ENCODE measurements at regions of chr2 and their contacts with region 1.

Region 1: GRCh38 chr2:64831134-64831976 is 157.8 kb upstream of the SLC1A4 start:
- H3K4me3 Mint-ChIP-seq: peak overlapping the region; percentile 35
- H3K27ac Mint-ChIP-seq: peak overlapping the region; percentile 86
- H3K4me1 Mint-ChIP-seq: peaks cover 47% of the 10 kb centered on the region
- H3K27me3 Mint-ChIP-seq: no peaks in the 10 kb centered on the region

Region 2: GRCh38 chr2:64644177-64645004 is 187.0 kb before region 1 on chr2:
- intact Hi-C with region 1: loop called (anchors 1 kb)
- H3K4me3 Mint-ChIP-seq: peak overlapping the region; percentile 91
- H3K27ac Mint-ChIP-seq: peak overlapping the region; percentile 98
- H3K4me1 Mint-ChIP-seq: peaks cover 64% of the 10 kb centered on the region
- H3K27me3 Mint-ChIP-seq: no peaks in the 10 kb centered on the region

Region 3: GRCh38 chr2:64767670-64768468 is 63.5 kb before region 1 on chr2:
- intact Hi-C with region 1: loop called (anchors 5 kb)
- H3K4me3 Mint-ChIP-seq: peak overlapping the region; percentile 88
- H3K27ac Mint-ChIP-seq: peak overlapping the region; percentile 80
- H3K4me1 Mint-ChIP-seq: peaks cover 42% of the 10 kb centered on the region
- H3K27me3 Mint-ChIP-seq: peaks cover 2% of the 10 kb centered on the region

Region 4: GRCh38 chr2:64865073-64865830 is 33.9 kb after region 1 on chr2:
- intact Hi-C with region 1: loop called (anchors 2 kb)
- H3K4me3 Mint-ChIP-seq: peak overlapping the region; percentile 68
- H3K27ac Mint-ChIP-seq: no peak overlapping the region
- H3K4me1 Mint-ChIP-seq: no peaks in the 10 kb centered on the region
- H3K27me3 Mint-ChIP-seq: peaks cover 3% of the 10 kb centered on the region

Region 5: DNA sequence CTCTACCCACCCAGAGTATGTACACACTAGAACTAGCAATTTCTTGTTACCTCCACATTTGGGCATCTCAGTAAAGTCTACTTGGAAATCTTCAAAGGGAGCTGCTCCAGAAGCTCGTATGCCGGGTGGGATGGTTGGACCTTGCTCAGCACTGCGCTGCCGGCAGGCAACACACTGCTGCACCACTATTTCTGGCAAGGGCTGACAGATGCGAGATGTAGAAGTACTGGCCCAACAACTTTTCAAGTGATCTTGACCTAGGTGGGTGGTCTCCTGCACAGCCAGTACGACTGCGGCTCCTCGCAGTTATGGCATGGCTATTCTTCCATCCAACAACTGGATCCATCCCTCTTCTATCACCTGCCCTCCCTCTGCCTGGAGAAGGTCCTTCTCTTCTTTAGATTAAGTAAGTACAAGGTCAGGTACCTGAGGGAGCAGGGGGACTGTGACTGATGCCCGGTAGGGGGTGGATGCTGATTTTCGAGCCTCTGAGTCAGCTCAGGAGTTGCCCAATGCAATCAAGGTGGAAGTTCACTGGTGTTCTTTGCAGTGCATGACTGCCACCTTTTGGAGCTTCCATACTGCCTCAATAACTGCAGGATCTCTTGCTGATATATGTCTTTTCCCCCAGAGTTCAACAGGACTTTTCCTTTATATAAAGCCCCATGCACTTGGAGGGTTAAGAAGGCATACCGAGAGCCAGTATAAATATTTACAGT is 57.4 kb after region 1 on chr2:
- intact Hi-C with region 1: no loop called
- H3K4me3 Mint-ChIP-seq: no peak overlapping the region
- H3K27ac Mint-ChIP-seq: no peak overlapping the region
- H3K4me1 Mint-ChIP-seq: no peaks in the 10 kb centered on the region
- H3K27me3 Mint-ChIP-seq: peaks cover 10% of the 10 kb centered on the region

Measured in dendritic cell treated with granulocyte-macrophage colony-stimulating factor and Interleukin-4, amounts not matched to agents 40 ng/mL and 50 ng/mL, for 4 days (primary cell).